ENCODE measurements at regions of chr14 and their contacts with region 1.

Region 1: DNA sequence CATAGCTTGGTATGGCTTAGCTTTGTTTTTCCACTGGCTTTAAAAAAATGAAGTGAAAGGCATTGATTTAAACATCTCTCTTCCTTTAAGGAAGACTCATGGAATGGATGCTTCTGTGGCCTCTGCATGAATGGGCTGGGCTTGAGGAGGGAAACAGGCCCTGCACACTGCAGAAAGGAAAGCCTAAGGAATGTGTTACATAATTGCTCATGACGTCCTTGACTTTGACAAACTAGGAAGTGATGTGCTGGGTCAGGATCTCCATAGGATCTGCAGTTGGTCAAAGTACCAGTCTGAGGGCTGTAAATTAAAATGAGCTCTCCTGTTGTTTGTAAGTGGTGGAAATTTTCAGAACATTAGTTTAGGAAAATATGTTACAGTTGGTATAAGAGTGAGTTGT is 12.7 kb downstream of the SAMD4A start:
- DNase-seq: no peak
- H3K4me3 ChIP-seq: no peak overlapping the region
- H3K27ac ChIP-seq: no peak overlapping the region
- H3K4me1 ChIP-seq: no peaks in the 10 kb centered on the region
- H3K27me3 ChIP-seq: no peaks in the 10 kb centered on the region
- CTCF ChIP-seq: no peak
- POLR2A ChIP-seq: no peak

Region 2: DNA sequence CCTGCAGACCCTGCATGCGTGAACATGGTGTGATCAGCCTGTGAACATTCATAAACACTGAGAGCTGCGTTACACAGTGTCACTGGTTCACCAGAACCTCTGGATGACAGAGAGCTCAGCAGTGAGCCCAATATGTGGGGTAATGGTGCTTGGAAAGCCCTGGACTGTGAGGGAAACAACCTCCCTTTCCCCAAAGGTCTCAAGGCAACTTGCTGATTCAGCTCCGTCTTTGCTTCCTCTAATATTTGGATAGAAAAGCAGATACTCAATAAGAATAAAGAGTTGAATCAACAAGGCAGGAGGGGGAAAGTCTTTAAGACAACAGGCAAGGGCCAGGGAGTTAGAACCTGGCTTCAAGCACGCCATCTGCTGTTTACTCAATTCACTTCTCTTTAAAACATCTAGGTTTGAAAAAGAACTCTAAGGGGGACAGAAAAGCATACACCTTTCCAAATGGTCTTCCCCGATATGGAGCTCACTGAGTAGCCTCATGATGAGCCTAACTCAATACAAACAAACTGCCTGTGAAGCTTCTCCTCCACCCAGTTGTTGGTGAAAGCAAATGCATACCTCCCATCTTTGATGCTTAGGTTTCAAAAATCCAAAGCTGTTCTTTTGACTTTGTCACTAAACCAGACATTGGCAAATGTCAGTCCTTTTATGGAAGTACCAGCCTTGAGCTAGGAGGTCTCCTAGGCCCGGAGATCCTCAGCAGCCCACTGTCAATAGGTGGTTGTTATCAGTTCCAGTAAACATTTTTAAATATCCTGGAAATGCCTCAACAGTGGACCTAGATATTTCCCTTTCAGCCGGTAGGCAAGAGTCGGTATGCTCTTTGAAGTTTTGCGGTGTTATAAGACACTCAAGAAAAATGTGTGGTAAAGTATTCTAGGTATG is 63.4 kb after region 1 on chr14:
- intact Hi-C with region 1: loop called (anchors 5 kb)
- DNase-seq: peak in 1 of 2 donors; percentile 30
- H3K4me3 ChIP-seq: no peak overlapping the region
- H3K27ac ChIP-seq: peak overlapping the region in 1 of 3 donors; percentile 40
- H3K4me1 ChIP-seq: peaks cover 6 to 17% of the 10 kb centered on the region in 2 donors
- H3K27me3 ChIP-seq: no peaks in the 10 kb centered on the region
- CTCF ChIP-seq: peak in 4 of 6 experiments; percentile 26 to 37 (median 36)
- POLR2A ChIP-seq: no peak

Measured in thyroid gland (tissue), 4 donors.